Activated CD4-positive, alpha-beta T cell treated with anti-CD3 and anti-CD28 coated beads for 36 hours (primary cell): ENCODE measurements at regions of chr3 and their contacts with region 1.

Region 1: GRCh38 chr3:12868039-12869034 is 27.0 kb upstream of the RPL32 start:
- DNase-seq: peak; percentile 79
- ATAC-seq: peak; percentile 88
- H3K4me3 Mint-ChIP-seq: peak overlapping the region; percentile 72
- H3K27ac Mint-ChIP-seq: peak overlapping the region; percentile 71
- H3K4me1 Mint-ChIP-seq: peaks cover 9% of the 10 kb centered on the region
- H3K27me3 Mint-ChIP-seq: peaks cover 8% of the 10 kb centered on the region

Region 2: GRCh38 chr3:12916159-12916558 is 47.8 kb after region 1 on chr3:
- CTCF ChIA-PET with region 1: no interaction called
- POLR2A ChIA-PET with region 1: no interaction called
- intact Hi-C with region 1: no loop called
- DNase-seq: peak; percentile 25
- ATAC-seq: peak; percentile 52
- H3K4me3 Mint-ChIP-seq: no peak overlapping the region
- H3K27ac Mint-ChIP-seq: no peak overlapping the region
- H3K4me1 Mint-ChIP-seq: peaks cover 16% of the 10 kb centered on the region
- H3K27me3 Mint-ChIP-seq: no peaks in the 10 kb centered on the region

Region 3: DNA sequence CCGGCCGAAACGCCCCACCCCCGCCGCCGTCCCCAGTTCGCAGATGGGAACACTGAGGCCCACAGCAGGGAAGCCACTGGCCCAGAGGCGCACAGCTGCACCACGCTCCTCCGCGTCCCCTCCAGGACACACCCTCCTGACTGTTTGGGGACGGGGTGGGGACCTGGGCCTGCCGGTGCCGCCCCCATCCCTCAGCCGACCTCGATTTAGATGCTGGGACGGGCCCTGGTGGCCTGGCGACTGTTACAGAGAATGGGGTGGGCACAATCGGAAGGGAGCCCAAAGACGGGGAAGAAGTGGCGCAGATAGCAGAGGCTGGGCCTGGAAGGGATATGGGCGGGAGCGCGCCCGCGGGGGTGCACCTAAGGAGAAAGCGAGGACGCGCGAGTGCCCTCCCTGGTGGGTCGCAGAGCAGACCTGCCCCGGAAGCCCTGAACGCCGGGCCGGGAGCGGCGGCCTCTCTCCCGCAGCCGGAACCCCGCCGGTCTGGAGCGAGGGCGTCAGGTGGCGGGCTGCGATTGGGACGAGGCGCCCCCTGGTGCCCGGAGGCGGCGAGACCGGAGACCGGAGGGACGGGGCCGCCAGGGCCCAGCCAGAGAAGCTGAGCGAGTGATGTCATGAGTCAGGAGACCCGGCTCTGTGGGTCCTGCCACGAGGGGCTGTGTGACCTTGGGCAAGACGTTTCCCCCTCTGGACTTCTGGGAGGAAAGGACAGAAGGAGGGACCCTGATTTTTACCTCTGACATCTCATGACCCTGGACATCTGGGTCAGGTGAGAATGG is 126.5 kb after region 1 on chr3:
- CTCF ChIA-PET with region 1: interaction called, 3 read pairs
- POLR2A ChIA-PET with region 1: no interaction called
- intact Hi-C with region 1: loop called in 1 of 2 experiments (anchors 2 kb)
- DNase-seq: peak; percentile 93
- ATAC-seq: peak; percentile 91
- H3K4me3 Mint-ChIP-seq: peak overlapping the region; percentile 90
- H3K27ac Mint-ChIP-seq: peak overlapping the region; percentile 81
- H3K4me1 Mint-ChIP-seq: peaks cover 56% of the 10 kb centered on the region
- H3K27me3 Mint-ChIP-seq: no peaks in the 10 kb centered on the region